GM12878 (cell line): ENCODE measurements at regions of chr2 and their contacts with region 1.

Region 1: DNA sequence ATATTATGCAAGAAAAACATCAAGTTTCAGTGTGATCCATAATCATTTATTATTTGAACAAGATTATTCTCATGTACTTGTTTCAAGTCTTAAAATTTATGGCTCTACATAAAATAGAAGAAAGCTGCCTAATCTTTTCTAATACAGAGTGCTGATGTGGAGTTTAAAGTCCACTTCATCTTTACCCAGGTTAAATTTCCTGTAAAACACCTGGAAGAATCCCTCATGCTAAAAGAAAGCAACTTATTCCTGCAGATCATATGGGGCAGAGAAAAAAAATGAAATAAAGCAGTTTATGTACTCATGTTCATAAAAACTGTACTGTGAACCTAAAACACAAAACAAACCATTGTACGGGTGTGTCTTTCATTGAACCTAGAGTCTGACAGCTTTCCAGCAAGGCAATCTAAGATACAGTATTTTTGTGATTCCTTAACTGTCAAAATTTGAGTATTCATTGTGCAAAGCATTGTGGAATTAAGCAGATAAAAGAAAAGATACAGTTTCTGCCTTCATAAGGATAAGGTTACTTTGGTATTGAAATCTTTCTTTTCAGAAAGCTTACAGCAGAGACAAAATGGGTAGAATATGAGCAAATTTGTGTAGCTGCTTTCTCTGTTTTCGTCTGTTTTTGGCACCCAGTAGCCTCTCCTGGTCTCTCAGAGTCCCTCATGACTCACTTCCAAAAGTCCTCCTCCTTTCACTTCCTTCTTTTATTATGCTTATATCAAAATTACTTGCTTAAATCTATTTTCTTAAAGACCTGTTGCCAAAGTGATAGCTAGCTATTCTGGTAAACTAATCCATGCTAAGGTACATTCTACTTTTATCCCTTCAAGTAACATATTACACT is 26.9 kb upstream of the GLS start:
- DNase-seq: no peak
- ATAC-seq: peak; percentile 74
- H3K4me3 ChIP-seq: no peak overlapping the region
- H3K27ac ChIP-seq: no peak overlapping the region
- H3K4me1 ChIP-seq: no peaks in the 10 kb centered on the region
- H3K27me3 ChIP-seq: no peaks in the 10 kb centered on the region
- CTCF ChIP-seq: no peak
- EP300 ChIP-seq: no peak
- POLR2A ChIP-seq: no peak
- RAD21 ChIP-seq: no peak

Region 2: DNA sequence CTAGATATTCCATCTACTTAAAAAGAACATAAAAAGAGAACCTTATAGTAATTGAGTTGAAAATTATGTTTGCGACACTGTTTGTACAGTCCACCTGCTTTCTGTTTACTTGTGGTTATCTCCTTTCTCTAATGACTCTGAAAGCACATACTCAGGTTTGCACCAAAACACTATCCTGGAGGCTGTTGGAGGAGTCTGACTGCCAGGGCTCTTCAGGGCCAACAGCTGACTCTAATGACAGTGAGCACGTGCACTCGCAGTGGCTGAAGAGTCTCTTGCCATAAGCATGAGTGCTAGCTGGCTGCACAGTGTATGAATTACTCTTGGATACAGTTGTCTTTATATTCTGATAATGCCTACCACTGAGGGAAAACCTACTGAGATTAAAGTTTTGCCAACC is 10.2 kb after region 1 on chr2:
- CTCF ChIA-PET with region 1: interaction called, 26 read pairs
- POLR2A ChIA-PET with region 1: no interaction called
- RAD21 ChIA-PET with region 1: interaction called, 4 read pairs
- SMC1A ChIA-PET with region 1: interaction called, 7 read pairs
- in situ Hi-C with region 1: no loop called
- intact Hi-C with region 1: no loop called
- DNase-seq: no peak
- ATAC-seq: no peak
- H3K4me3 ChIP-seq: no peak overlapping the region
- H3K27ac ChIP-seq: no peak overlapping the region
- H3K4me1 ChIP-seq: no peaks in the 10 kb centered on the region
- H3K27me3 ChIP-seq: no peaks in the 10 kb centered on the region
- CTCF ChIP-seq: no peak
- EP300 ChIP-seq: no peak
- POLR2A ChIP-seq: no peak
- RAD21 ChIP-seq: no peak

Region 3: DNA sequence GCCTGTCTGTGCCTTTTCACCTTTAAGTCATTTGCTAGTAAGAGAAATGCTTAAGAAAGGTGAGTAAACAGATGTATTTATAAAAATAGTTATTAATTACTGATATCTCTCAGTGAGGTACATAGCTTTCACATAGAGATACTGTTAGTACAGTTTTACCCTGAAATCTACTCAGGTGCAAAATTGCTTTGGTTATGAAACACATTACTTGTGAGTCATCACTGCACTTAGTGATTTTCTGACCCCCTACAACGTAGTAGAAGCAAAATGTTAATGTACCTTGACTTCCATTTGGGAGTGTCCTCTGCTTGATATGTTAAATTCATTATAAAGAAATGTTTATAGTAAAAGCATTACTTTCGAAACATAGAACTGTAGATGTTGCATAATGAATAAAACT is 33.3 kb after region 1 on chr2:
- CTCF ChIA-PET with region 1: interaction called, 13 read pairs
- POLR2A ChIA-PET with region 1: interaction called, 3 read pairs
- RAD21 ChIA-PET with region 1: interaction called, 10 read pairs
- SMC1A ChIA-PET with region 1: interaction called, 17 read pairs
- in situ Hi-C with region 1: no loop called
- intact Hi-C with region 1: loop called (anchors 1 kb)
- DNase-seq: peak; percentile 48
- ATAC-seq: peak; percentile 66
- H3K4me3 ChIP-seq: 0 out of 2 replicates have a peak overlapping the region, but pooled peaks have one; percentile 22
- H3K27ac ChIP-seq: peak overlapping the region; percentile 95; the same call in 1 of the 2 replicates
- H3K4me1 ChIP-seq: peaks cover 28% of the 10 kb centered on the region
- H3K27me3 ChIP-seq: no peaks in the 10 kb centered on the region
- CTCF ChIP-seq: no peak
- EP300 ChIP-seq: no peak
- POLR2A ChIP-seq: no peak
- RAD21 ChIP-seq: no peak

Region 4: DNA sequence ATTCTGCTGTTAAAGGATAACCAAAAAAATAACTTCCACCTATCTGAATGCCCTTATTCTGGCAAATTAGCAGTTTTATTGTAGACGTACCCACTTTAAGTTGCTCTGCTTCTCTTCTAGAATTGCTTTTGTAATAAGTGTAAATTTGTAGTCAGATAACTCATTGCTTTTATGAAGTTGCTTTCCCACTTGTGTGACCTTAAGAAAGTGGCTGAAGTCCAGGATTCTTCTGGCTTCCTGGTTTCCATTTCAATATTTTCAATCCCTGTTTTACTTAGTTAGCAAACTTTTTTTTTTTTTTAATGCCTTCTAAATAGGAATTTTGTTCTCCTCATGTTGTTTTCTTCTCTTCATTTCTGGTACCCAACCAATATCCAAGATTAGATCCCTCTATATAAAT is 86.7 kb after region 1 on chr2:
- CTCF ChIA-PET with region 1: interaction called, 89 read pairs
- POLR2A ChIA-PET with region 1: no interaction called
- RAD21 ChIA-PET with region 1: interaction called, 37 read pairs
- SMC1A ChIA-PET with region 1: interaction called, 57 read pairs
- in situ Hi-C with region 1: no loop called
- intact Hi-C with region 1: no loop called
- DNase-seq: no peak
- ATAC-seq: no peak
- H3K4me3 ChIP-seq: no peak overlapping the region
- H3K27ac ChIP-seq: no peak overlapping the region
- H3K4me1 ChIP-seq: no peaks in the 10 kb centered on the region
- H3K27me3 ChIP-seq: no peaks in the 10 kb centered on the region
- CTCF ChIP-seq: no peak
- EP300 ChIP-seq: no peak
- POLR2A ChIP-seq: no peak
- RAD21 ChIP-seq: no peak

Region 5: DNA sequence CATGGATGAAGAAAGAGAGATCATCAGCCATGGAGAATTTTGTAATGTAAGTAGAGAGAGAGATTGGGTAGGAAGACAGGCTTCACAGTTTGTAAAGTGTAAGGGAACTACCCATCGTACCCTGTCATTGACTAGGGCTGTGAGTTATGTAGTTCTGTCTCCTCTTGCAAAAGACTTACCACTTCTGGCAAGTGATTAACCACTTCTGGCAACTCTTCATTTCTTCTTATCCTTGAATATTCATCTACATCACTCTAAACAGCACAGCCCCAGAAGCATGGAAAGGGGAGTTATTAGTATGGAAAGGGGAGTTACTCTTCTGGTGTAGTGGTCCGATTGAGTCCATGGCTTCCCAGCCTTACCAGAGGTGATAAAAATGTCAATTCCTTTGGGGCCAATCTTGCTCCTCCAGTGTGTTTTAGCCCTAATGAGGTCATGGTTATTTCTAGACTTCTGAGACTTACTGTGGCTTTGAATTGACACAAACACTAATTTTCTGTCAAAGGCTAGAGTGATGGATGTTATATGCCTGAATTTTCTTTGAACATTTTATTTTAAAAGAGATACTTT is 108.2 kb after region 1 on chr2:
- CTCF ChIA-PET with region 1: interaction called, 13 read pairs
- POLR2A ChIA-PET with region 1: no interaction called
- RAD21 ChIA-PET with region 1: interaction called, 3 read pairs
- SMC1A ChIA-PET with region 1: interaction called, 7 read pairs
- in situ Hi-C with region 1: no loop called
- intact Hi-C with region 1: loop called (anchors 5 kb)
- DNase-seq: no peak
- ATAC-seq: peak; percentile 31
- H3K4me3 ChIP-seq: no peak overlapping the region
- H3K27ac ChIP-seq: no peak overlapping the region
- H3K4me1 ChIP-seq: no peaks in the 10 kb centered on the region
- H3K27me3 ChIP-seq: no peaks in the 10 kb centered on the region
- CTCF ChIP-seq: no peak
- EP300 ChIP-seq: no peak
- POLR2A ChIP-seq: peak; percentile 68
- RAD21 ChIP-seq: no peak